Prostate gland (tissue), 2 donors: ENCODE measurements at regions of chr17 and their contacts with region 1.

Region 1: GRCh38 chr17:44344939-44345453 is at the start of gene GRN:
- DNase-seq: peak; percentile 98
- H3K4me3 ChIP-seq: peak within 1 kb of the TSS; percentile 76 to 78
- H3K27ac ChIP-seq: peak within 1 kb of the TSS; percentile 79 to 84
- H3K4me1 ChIP-seq: no peaks in the 10 kb centered on the region
- H3K27me3 ChIP-seq: no peaks in the 10 kb centered on the region
- CTCF ChIP-seq: peak in 1 of 4 experiments; percentile 2
- POLR2A ChIP-seq: peak; percentile 85
- total RNA-seq, gene GRN: 319 to 404 TPM

Region 2: DNA sequence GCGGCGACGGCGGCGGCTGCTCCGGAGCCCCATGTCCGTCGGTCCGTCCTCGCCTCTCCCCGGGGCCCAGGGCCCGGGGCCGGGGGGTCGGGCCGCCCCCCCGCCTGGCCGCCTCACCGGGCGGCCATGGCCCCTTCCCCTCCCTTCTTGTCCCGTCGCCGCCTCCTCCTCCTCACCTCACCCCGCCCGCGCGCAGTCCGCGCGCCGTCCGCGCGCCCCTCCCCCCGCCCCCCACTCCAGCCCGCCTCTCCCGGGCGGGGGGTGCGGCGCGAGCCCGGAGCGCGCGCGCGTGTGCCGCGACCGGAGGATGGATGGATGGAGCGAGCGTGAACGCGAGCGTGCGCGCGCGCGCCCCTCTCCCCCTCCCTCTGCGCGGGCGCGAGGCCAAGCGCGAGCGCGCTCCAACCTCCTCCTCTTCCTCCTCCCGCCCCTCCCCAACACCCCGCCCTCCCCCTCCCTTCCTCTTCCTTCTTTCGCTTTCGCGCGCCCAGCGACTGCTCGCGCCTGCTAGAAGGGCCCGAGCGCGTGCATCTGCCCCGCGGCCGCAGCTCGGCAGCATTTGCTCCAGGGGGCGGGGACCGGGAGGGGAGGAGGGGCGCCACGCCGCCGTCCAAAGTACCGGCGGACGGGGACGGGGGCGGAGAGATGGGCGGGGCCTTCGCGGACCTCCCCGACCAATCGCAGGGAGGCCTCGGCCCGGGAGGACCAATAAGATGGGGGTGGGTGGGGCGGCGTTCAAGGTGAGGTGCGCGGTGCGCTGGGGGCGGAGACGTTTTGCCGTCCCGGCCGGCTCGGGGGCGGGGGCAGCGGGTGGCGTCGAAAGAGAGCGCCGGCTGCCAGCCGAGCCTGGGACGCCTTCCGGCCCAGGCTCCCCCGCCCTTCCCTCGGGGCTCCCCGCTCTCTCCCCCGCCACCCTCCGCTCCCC is 145.2 kb before region 1 on chr17 and contains the start of gene ATXN7L3:
- intact Hi-C with region 1: no loop called
- DNase-seq: peak; percentile 99
- H3K4me3 ChIP-seq: peak within 1 kb of the TSS; percentile 85 to 98
- H3K27ac ChIP-seq: peak within 1 kb of the TSS; percentile 98 to 100
- H3K4me1 ChIP-seq: peaks cover 4% of the 10 kb centered on the region
- H3K27me3 ChIP-seq: no peaks in the 10 kb centered on the region
- CTCF ChIP-seq: no peak
- POLR2A ChIP-seq: peak; percentile 16
- total RNA-seq, gene ATXN7L3: 45.8 to 72.0 TPM

Region 3: DNA sequence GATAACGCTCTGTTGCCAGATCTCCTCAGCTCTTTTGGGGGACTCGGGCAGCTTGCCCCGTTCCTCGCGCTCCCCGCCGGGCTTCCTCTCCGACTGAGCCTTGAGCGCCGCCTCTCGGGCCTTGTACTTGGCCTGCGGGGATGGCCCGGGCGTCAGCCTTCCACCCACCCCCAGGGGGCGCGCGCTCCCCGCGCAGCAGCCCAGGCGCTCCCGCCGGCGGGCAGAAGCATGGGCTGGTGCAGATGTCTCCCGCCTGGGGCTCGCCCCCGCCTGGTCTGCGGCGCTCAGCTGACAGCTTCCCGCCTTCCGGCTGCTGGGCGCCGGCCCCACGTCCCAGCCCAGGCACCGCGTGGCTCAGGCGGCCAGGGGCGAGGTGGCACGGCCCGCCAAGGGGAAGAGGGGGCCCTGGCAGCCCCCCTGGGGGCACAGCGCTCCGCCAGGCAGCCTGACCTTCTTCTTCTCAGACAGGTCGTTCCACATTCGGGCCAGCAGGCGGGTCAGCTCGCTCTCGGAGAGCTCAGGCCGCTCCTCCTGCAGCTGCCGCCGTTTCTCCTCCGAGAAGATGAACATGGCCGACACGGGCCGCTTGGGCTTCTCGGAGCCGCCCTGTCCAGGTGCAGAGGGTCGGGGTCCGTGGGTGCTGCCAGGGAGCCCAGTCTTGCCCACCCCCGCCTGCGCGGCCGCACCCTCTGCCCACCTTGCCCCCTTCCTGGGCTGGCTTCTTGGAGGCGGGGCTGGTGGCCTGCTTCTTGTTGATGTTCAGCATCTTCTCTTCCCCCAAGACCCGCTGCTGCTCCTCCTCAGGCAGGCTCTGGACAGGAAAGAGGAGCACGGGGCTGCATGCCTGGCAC is 134.4 kb before region 1 on chr17:
- intact Hi-C with region 1: loop called (anchors 5 kb)
- DNase-seq: peak; percentile 75
- H3K4me3 ChIP-seq: no peak overlapping the region
- H3K27ac ChIP-seq: peak overlapping the region; percentile 24 to 50
- H3K4me1 ChIP-seq: no peaks in the 10 kb centered on the region
- H3K27me3 ChIP-seq: no peaks in the 10 kb centered on the region
- CTCF ChIP-seq: peak; percentile 94 to 99 (median 98)
- POLR2A ChIP-seq: no peak

Region 4: DNA sequence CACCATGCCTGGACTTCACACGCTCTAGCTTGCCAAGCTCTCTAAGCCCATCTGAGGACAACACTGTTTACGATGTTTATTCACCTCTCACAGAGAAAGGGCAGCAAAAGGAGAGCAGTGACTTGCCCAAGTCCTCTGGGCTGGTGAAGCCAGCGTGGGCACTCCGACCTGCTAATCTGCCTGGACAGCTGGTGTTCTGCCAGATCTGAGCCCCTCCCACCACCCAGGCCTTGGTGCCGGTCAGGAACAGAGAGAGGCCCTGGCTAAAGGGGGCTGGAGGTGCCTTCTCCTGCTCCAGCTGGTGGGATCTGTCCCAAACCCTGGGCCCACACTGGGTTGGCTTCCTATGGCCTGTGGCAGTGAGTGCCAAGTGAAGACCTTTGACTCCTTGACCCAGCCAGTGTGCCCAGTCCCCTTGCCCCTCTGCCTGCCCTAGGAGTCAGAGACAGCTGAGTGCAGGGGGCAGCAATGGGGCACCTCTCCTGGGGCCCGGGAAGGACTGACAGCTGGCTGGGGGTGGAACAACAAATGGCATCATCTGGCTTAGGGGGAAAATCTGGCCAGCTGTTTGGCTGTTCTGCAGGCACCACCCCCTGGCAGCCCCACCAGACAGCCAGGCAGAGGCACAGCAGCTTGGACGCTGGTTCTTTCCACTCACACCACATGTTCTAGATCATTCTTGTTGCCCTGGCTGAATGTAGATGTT is 75.3 kb before region 1 on chr17:
- intact Hi-C with region 1: no loop called
- DNase-seq: no peak
- H3K4me3 ChIP-seq: no peak overlapping the region
- H3K27ac ChIP-seq: no peak overlapping the region
- H3K4me1 ChIP-seq: no peaks in the 10 kb centered on the region
- H3K27me3 ChIP-seq: no peaks in the 10 kb centered on the region
- CTCF ChIP-seq: no peak
- POLR2A ChIP-seq: no peak

Region 5: GRCh38 chr17:44324571-44325275 is 20.3 kb before region 1 on chr17 and contains the start of gene SLC25A39:
- intact Hi-C with region 1: loop called (anchors 2 kb)
- DNase-seq: peak; percentile 92
- H3K4me3 ChIP-seq: peak within 1 kb of the TSS; percentile 98 to 99
- H3K27ac ChIP-seq: peak within 1 kb of the TSS; percentile 92 to 93
- H3K4me1 ChIP-seq: peaks cover 6% of the 10 kb centered on the region
- H3K27me3 ChIP-seq: no peaks in the 10 kb centered on the region
- CTCF ChIP-seq: peak in 2 of 4 experiments; percentile 32 to 40
- POLR2A ChIP-seq: peak; percentile 62
- total RNA-seq, gene SLC25A39: 116 to 132 TPM

Region 6: DNA sequence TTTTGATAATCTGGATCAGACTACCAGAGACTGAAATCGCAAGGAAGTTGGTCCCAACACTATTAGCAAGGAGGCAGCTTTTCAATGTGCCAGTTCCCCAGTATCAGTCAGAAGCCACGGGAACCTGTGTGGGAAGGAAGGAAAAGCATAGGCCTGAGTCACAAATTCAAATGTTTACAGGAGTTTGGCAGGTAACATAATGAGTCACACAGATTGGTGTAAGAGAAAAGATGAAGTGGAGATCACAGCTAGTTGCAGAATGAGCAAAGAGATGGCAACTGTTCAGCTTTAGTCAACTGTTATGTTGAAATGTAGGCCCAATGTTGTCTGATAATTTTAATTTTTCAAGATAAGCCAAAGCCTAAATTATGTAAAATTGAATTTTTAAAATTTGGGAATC is 72.6 kb after region 1 on chr17:
- intact Hi-C with region 1: no loop called
- DNase-seq: no peak
- H3K4me3 ChIP-seq: no peak overlapping the region
- H3K27ac ChIP-seq: no peak overlapping the region
- H3K4me1 ChIP-seq: no peaks in the 10 kb centered on the region
- H3K27me3 ChIP-seq: no peaks in the 10 kb centered on the region
- CTCF ChIP-seq: no peak
- POLR2A ChIP-seq: no peak